ENCODE measurements at regions of chr11 and their contacts with region 1.

Region 1: GRCh38 chr11:128405714-128406662 is 181.4 kb downstream of the ETS1 start:
- DNase-seq: no peak
- ATAC-seq: no peak
- H3K4me3 Mint-ChIP-seq: no peak overlapping the region
- H3K27ac Mint-ChIP-seq: peak overlapping the region in 3 of 10 donors; percentile 15 to 54 (median 52)
- H3K4me1 Mint-ChIP-seq: peaks cover 9 to 60% (median 27%) of the 10 kb centered on the region in 4 donors
- H3K27me3 Mint-ChIP-seq: no peaks in the 10 kb centered on the region

Region 2: GRCh38 chr11:128394431-128395089 is 11.4 kb before region 1 on chr11:
- POLR2A ChIA-PET with region 1: interaction called, 14 read pairs
- DNase-seq: no peak
- ATAC-seq: no peak
- H3K4me3 Mint-ChIP-seq: no peak overlapping the region
- H3K27ac Mint-ChIP-seq: peak overlapping the region in 2 of 10 donors; percentile 23 to 27
- H3K4me1 Mint-ChIP-seq: peaks cover 11 to 25% (median 23%) of the 10 kb centered on the region in 4 donors
- H3K27me3 Mint-ChIP-seq: no peaks in the 10 kb centered on the region

Measured in naive thymus-derived CD8-positive, alpha-beta T cell (primary cell).